PC-3 (cell line): ENCODE measurements at regions of chr3 and their contacts with region 1.

Region 1: GRCh38 chr3:184362668-184363540 is 1.4 kb downstream of the POLR2H start:
- DNase-seq: peak; percentile 99
- ATAC-seq: peak; percentile 71
- H3K4me3 ChIP-seq: peak overlapping the region; percentile 84
- H3K27ac ChIP-seq: peak overlapping the region; percentile 94
- H3K4me1 ChIP-seq: peaks cover 21% of the 10 kb centered on the region
- H3K27me3 ChIP-seq: no peaks in the 10 kb centered on the region
- CTCF ChIP-seq: peak; percentile 70

Region 2: GRCh38 chr3:184298759-184299496 is 64.0 kb before region 1 on chr3 and contains the start of gene PSMD2:
- CTCF ChIA-PET with region 1: no interaction called
- POLR2A ChIA-PET with region 1: no interaction called
- intact Hi-C with region 1: loop called (anchors 2 kb)
- DNase-seq: peak; percentile 97
- ATAC-seq: peak; percentile 89
- H3K4me3 ChIP-seq: peak within 1 kb of the TSS; percentile 100
- H3K27ac ChIP-seq: peak within 1 kb of the TSS; percentile 80
- H3K4me1 ChIP-seq: peaks cover 20% of the 10 kb centered on the region
- H3K27me3 ChIP-seq: no peaks in the 10 kb centered on the region
- CTCF ChIP-seq: no peak
- total RNA-seq, gene PSMD2: 1,057 and 1,393 TPM in 2 replicates

Region 3: GRCh38 chr3:184335661-184336546 is 27.0 kb before region 1 on chr3:
- CTCF ChIA-PET with region 1: no interaction called
- POLR2A ChIA-PET with region 1: no interaction called
- intact Hi-C with region 1: loop called (anchors 2 kb)
- DNase-seq: peak; percentile 75
- ATAC-seq: peak; percentile 49
- H3K4me3 ChIP-seq: peak overlapping the region; percentile 71
- H3K27ac ChIP-seq: peak overlapping the region; percentile 95
- H3K4me1 ChIP-seq: peaks cover 62% of the 10 kb centered on the region
- H3K27me3 ChIP-seq: no peaks in the 10 kb centered on the region
- CTCF ChIP-seq: no peak

Region 4: GRCh38 chr3:184345317-184346144 is 17.4 kb before region 1 on chr3:
- CTCF ChIA-PET with region 1: interaction called, 3 read pairs
- POLR2A ChIA-PET with region 1: interaction called, 8 read pairs
- intact Hi-C with region 1: loop called (anchors 1 kb)
- DNase-seq: peak; percentile 86
- ATAC-seq: peak; percentile 96
- H3K4me3 ChIP-seq: no peak overlapping the region
- H3K27ac ChIP-seq: no peak overlapping the region
- H3K4me1 ChIP-seq: peaks cover 3% of the 10 kb centered on the region; the same call in 1 of the 2 replicates
- H3K27me3 ChIP-seq: no peaks in the 10 kb centered on the region
- CTCF ChIP-seq: peak; percentile 82

Region 5: DNA sequence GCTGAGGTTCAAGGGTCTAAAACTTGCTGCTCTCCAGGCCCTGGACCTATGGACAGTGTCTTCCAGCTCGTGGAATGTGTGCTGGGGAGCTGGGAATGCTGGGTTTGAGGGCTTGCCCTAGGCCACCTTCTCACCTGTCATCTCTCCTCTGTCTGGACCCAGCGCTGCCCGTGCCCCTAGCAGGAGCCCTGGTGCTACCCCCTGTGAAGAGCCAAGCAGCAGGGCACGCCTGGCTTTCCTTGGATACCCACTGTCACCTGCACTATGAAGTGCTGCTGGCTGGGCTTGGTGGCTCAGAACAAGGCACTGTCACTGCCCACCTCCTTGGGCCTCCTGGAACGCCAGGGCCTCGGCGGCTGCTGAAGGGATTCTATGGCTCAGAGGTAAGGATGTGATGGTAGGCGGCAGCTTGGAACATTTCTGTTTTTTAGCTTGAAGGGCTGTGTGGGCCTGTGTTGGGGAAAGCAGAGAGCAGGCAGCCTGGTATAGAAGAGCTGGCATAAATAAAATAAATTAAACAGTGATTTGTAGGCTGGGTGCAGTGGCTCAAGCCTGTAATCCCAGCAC is 22.0 kb after region 1 on chr3:
- CTCF ChIA-PET with region 1: no interaction called
- POLR2A ChIA-PET with region 1: interaction called, 10 read pairs
- intact Hi-C with region 1: no loop called
- DNase-seq: no peak
- ATAC-seq: no peak
- H3K4me3 ChIP-seq: no peak overlapping the region
- H3K27ac ChIP-seq: no peak overlapping the region
- H3K4me1 ChIP-seq: no peaks in the 10 kb centered on the region
- H3K27me3 ChIP-seq: peaks cover 28% of the 10 kb centered on the region
- CTCF ChIP-seq: no peak

Region 6: DNA sequence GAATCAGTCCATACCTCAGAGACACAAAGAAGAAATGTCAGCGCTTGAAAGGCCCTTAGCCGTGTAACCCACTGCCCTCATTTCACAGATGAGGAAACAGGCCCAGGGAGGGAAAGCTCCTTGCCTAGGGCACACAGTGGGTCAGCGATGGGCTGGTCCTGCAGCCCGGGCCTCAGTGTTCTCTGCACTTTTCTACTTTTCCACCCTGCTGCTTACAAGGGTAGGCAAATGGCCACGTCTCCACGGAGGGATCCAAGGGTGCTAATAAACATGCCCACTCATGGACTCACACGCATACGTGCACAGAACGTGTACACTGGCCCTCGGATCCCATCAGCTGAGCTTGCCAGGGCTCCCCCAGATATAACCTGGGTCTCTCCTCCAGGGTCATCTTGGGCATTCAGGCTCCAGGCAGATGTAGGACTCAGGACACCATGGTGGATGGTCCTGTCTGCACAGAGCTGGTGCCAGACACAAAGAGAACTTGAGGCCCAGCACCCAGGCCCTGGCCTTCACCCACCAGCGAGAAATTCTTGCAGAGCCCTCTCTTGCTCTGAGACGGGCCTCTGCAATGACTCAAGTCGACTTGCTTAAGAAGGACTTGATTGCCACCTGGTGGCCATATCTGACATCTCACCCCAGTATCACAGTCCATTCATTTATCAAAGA is 414.6 kb after region 1 on chr3:
- CTCF ChIA-PET with region 1: interaction called, 21 read pairs
- POLR2A ChIA-PET with region 1: no interaction called
- intact Hi-C with region 1: no loop called
- DNase-seq: peak; percentile 94
- ATAC-seq: peak; percentile 96
- H3K4me3 ChIP-seq: no peak overlapping the region
- H3K27ac ChIP-seq: no peak overlapping the region
- H3K4me1 ChIP-seq: no peaks in the 10 kb centered on the region
- H3K27me3 ChIP-seq: no peaks in the 10 kb centered on the region
- CTCF ChIP-seq: peak; percentile 93

Region 7: GRCh38 chr3:185645596-185646381 is 1282.9 kb after region 1 on chr3:
- CTCF ChIA-PET with region 1: no interaction called
- POLR2A ChIA-PET with region 1: interaction called, 13 read pairs
- intact Hi-C with region 1: no loop called
- DNase-seq: no peak
- ATAC-seq: no peak
- H3K4me3 ChIP-seq: no peak overlapping the region
- H3K27ac ChIP-seq: no peak overlapping the region
- H3K4me1 ChIP-seq: peaks cover 8% of the 10 kb centered on the region; the same call in 1 of the 2 replicates
- H3K27me3 ChIP-seq: no peaks in the 10 kb centered on the region
- CTCF ChIP-seq: no peak